PC-9 (cell line): ENCODE measurements at regions of chr7 and their contacts with region 1.

Region 1: GRCh38 chr7:45923290-45923689 is 2.2 kb upstream of the IGFBP3 start:
- DNase-seq: peak; percentile 93 to 94
- H3K4me3 ChIP-seq: no peak overlapping the region
- H3K27ac ChIP-seq: peak overlapping the region; percentile 52
- H3K4me1 ChIP-seq: peaks cover 41% of the 10 kb centered on the region
- H3K27me3 ChIP-seq: no peaks in the 10 kb centered on the region
- CTCF ChIP-seq: peak; percentile 99

Region 2: DNA sequence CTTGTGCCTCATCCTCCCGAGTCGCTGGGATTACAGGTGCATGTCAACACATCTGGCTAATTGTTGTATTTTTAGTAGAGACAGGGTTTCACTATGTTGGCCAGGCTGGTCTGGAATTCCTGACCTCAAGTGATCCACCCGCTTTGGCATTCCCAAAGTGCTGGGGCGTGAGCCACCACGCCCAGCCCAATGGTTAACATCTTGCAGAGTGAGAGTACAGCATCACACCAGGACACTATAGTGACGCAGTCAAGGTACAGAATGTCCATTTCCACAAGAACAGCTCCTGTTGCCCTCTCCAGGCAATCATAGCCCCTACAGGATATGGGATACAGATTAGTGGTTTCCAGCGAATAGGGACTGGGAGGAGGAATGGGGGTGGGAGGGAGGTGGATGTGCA is 978.5 kb before region 1 on chr7:
- CTCF ChIA-PET with region 1: no interaction called
- POLR2A ChIA-PET with region 1: no interaction called
- intact Hi-C with region 1: no loop called
- DNase-seq: no peak
- H3K4me3 ChIP-seq: no peak overlapping the region
- H3K27ac ChIP-seq: no peak overlapping the region
- H3K4me1 ChIP-seq: no peaks in the 10 kb centered on the region
- H3K27me3 ChIP-seq: peaks cover 11% of the 10 kb centered on the region; the same call in 1 of the 2 replicates
- CTCF ChIP-seq: no peak

Region 3: DNA sequence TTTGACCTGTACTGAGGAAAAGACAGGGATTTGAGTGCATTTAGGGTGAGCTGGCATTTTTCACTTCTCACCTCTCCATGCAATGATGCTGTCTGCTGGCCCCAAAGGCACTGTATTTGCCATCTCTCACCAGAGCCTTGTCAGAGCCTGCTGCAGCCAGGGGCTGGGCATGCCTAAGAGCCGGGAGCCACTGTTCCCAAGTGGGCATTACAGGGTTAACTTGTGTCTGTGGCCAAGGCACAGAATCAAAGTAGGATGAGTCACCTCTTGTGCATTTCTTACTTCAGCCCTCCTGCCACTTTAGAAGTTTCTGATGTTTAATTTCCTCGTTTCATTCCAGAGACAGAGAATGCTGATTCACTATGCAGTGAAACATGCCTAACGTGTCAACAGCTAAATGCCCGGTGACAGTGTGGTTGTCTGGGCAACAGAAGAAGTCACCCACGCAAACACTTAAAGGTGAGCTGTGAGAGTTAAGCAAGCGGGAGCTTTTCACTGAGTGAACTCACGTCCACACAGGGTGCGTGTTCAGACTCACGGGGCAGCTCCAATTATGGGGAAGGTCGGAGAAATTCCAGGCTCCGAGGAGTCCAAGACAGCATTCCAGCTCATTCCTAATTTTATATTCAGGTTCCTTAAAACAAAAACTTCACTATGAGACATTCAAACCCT is 54.9 kb after region 1 on chr7:
- CTCF ChIA-PET with region 1: interaction called, 4 read pairs
- POLR2A ChIA-PET with region 1: interaction called, 7 read pairs
- intact Hi-C with region 1: loop called (anchors 1 kb)
- DNase-seq: peak; percentile 91 to 100
- H3K4me3 ChIP-seq: peak overlapping the region; percentile 23; the same call in 1 of the 2 replicates
- H3K27ac ChIP-seq: peak overlapping the region; percentile 97
- H3K4me1 ChIP-seq: peaks cover 52% of the 10 kb centered on the region
- H3K27me3 ChIP-seq: no peaks in the 10 kb centered on the region
- CTCF ChIP-seq: no peak

Region 4: DNA sequence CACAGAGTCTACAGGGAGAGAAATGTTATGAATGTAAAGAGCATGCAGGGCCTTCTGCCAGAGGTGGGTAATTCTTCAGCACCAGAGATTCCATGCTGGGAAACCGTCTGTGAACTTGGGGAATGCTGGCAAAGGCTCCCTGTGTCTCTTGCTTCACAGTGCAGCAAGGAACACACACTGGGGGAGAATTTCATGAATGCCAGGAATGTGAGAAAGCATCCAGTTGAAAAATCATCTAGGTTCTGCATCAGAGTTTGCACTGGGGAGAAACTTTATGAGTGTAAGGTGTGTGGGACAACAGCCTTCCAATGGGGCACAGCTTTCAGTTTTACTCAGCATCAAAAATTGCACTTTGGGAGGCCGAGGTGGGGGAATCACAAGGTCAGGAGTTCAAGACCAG is 222.1 kb after region 1 on chr7:
- CTCF ChIA-PET with region 1: no interaction called
- POLR2A ChIA-PET with region 1: no interaction called
- intact Hi-C with region 1: loop called (anchors 1 kb)
- DNase-seq: peak; percentile 89 to 99
- H3K4me3 ChIP-seq: no peak overlapping the region
- H3K27ac ChIP-seq: peak overlapping the region; percentile 80
- H3K4me1 ChIP-seq: peaks cover 29% of the 10 kb centered on the region
- H3K27me3 ChIP-seq: no peaks in the 10 kb centered on the region
- CTCF ChIP-seq: no peak

Region 5: DNA sequence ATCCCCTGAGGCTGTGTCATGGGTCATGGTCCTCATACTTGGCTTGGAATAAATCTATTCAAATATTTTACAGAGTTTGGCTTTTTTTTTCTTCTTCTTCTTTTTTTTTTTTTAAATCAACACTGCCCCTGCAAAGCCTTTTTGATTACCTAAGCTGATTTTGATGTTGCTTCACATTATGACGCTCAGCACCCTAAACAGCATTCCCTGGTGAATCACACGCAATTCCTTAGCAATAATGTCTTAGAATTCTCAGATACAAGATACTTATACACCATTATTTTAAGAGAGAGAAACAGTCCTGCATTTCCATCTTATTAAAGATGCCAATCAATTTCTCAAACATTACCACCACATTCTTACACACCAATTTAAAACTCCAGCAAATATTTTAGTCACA is 321.5 kb after region 1 on chr7:
- CTCF ChIA-PET with region 1: interaction called, 10 read pairs
- POLR2A ChIA-PET with region 1: interaction called, 3 read pairs
- intact Hi-C with region 1: no loop called
- DNase-seq: no peak
- H3K4me3 ChIP-seq: no peak overlapping the region
- H3K27ac ChIP-seq: no peak overlapping the region
- H3K4me1 ChIP-seq: peaks cover 15% of the 10 kb centered on the region
- H3K27me3 ChIP-seq: no peaks in the 10 kb centered on the region
- CTCF ChIP-seq: no peak

Region 6: GRCh38 chr7:46454816-46455215 is 531.5 kb after region 1 on chr7:
- CTCF ChIA-PET with region 1: no interaction called
- POLR2A ChIA-PET with region 1: no interaction called
- intact Hi-C with region 1: loop called (anchors 1 kb)
- DNase-seq: no peak
- H3K4me3 ChIP-seq: no peak overlapping the region
- H3K27ac ChIP-seq: no peak overlapping the region
- H3K4me1 ChIP-seq: no peaks in the 10 kb centered on the region
- H3K27me3 ChIP-seq: no peaks in the 10 kb centered on the region
- CTCF ChIP-seq: no peak

Region 7: GRCh38 chr7:46908770-46909169 is 985.5 kb after region 1 on chr7:
- CTCF ChIA-PET with region 1: no interaction called
- POLR2A ChIA-PET with region 1: no interaction called
- intact Hi-C with region 1: loop called (anchors 5 kb)
- DNase-seq: peak; percentile 53 to 88
- H3K4me3 ChIP-seq: no peak overlapping the region
- H3K27ac ChIP-seq: no peak overlapping the region
- H3K4me1 ChIP-seq: peaks cover 17% of the 10 kb centered on the region
- H3K27me3 ChIP-seq: no peaks in the 10 kb centered on the region
- CTCF ChIP-seq: no peak